Activated CD8-positive, alpha-beta T cell treated with anti-CD3 and anti-CD28 coated beads for 36 hours (primary cell): ENCODE measurements at regions of chr16 and their contacts with region 1.

Region 1: GRCh38 chr16:50665128-50665878 is 15.8 kb downstream of the SNX20 start:
- DNase-seq: peak; percentile 82
- ATAC-seq: peak; percentile 48
- H3K4me3 Mint-ChIP-seq: peak overlapping the region; percentile 54
- H3K27ac Mint-ChIP-seq: peak overlapping the region; percentile 58
- H3K4me1 Mint-ChIP-seq: peaks cover 31% of the 10 kb centered on the region
- H3K27me3 Mint-ChIP-seq: no peaks in the 10 kb centered on the region
- CTCF ChIP-seq: peak; percentile 96

Region 2: DNA sequence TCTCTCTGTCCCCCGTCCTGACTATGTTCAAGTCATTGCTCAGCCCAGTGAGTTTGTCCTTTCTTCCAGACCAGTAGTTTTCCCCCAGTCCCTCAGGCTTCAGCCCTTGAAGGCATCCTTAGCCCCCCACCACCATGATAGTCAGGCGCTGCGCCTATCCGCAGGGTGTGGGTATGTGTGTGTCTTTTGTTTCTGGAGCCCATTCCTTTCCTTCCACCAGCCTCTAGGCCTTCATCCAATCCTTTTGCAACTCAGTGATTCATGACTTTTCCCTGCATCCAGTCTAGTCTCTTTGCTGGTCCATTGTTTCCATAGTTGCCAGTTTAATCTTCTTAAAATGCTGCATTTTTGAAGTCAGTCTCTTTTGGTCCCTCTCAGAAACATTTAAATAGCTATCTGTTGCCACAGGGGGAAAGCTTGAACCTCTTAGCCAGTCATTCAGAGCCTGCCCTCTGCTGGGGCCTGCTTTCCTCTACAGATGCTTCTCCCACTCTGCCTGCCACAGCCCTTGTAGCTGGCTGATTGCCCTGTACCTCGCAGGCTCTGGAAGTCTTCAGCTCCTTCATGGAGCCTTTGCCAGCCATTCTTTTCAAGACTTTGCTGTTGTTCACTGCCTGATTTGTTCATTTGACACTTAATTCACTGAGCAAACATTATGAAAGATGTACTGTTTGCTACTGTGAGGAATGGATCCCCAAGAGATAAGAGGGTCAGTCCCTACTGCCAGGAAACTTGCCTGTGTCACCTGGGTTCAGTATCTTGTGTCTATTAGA is 454.9 kb before region 1 on chr16:
- CTCF ChIA-PET with region 1: interaction called, 10 read pairs
- POLR2A ChIA-PET with region 1: no interaction called
- intact Hi-C with region 1: no loop called
- DNase-seq: peak; percentile 84
- ATAC-seq: peak; percentile 97
- H3K4me3 Mint-ChIP-seq: no peak overlapping the region
- H3K27ac Mint-ChIP-seq: peak overlapping the region; percentile 58
- H3K4me1 Mint-ChIP-seq: peaks cover 27% of the 10 kb centered on the region
- H3K27me3 Mint-ChIP-seq: no peaks in the 10 kb centered on the region
- CTCF ChIP-seq: peak; percentile 70

Region 3: GRCh38 chr16:50368410-50369132 is 296.7 kb before region 1 on chr16 and contains the start of gene BRD7:
- CTCF ChIA-PET with region 1: interaction called, 25 read pairs
- POLR2A ChIA-PET with region 1: no interaction called
- intact Hi-C with region 1: loop called (anchors 10 kb)
- DNase-seq: peak; percentile 65
- ATAC-seq: peak; percentile 91
- H3K4me3 Mint-ChIP-seq: peak within 1 kb of the TSS; percentile 93
- H3K27ac Mint-ChIP-seq: peak within 1 kb of the TSS; percentile 92
- H3K4me1 Mint-ChIP-seq: peaks cover 36% of the 10 kb centered on the region
- H3K27me3 Mint-ChIP-seq: no peaks in the 10 kb centered on the region
- CTCF ChIP-seq: no peak
- total RNA-seq, gene BRD7: 76.2 to 93.4 TPM

Region 4: GRCh38 chr16:50425648-50426047 is 239.7 kb before region 1 on chr16:
- CTCF ChIA-PET with region 1: no interaction called
- POLR2A ChIA-PET with region 1: no interaction called
- intact Hi-C with region 1: no loop called
- DNase-seq: no peak
- ATAC-seq: no peak
- H3K4me3 Mint-ChIP-seq: no peak overlapping the region
- H3K27ac Mint-ChIP-seq: no peak overlapping the region
- H3K4me1 Mint-ChIP-seq: no peaks in the 10 kb centered on the region
- H3K27me3 Mint-ChIP-seq: peaks cover 1% of the 10 kb centered on the region
- CTCF ChIP-seq: no peak

Region 5: DNA sequence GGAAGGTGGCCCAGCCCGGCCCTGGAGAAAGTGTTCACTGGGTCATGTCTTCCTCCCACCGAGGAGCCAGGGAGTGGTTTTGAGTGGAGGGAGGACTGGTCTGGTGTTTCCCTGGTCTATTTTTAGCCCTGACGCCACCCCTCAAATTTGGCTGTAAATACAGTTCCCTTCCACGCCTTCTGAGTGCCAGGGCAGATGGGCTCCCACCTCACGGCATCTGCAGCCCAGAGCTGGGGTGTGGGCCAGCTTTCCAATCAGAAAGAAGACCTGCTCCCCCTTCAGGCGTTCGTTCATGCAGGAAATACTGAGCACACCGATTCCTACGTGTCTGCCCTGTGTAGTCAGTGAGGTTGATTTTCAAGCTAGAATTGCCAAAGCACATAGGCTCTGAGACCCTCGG is 37.9 kb before region 1 on chr16:
- CTCF ChIA-PET with region 1: interaction called, 28 read pairs
- POLR2A ChIA-PET with region 1: no interaction called
- intact Hi-C with region 1: no loop called
- DNase-seq: peak; percentile 75
- ATAC-seq: peak; percentile 84
- H3K4me3 Mint-ChIP-seq: no peak overlapping the region
- H3K27ac Mint-ChIP-seq: peak overlapping the region; percentile 54
- H3K4me1 Mint-ChIP-seq: peaks cover 29% of the 10 kb centered on the region
- H3K27me3 Mint-ChIP-seq: no peaks in the 10 kb centered on the region
- CTCF ChIP-seq: peak; percentile 32

Region 6: GRCh38 chr16:50681021-50681885 is 15.9 kb after region 1 on chr16 and contains the start of gene SNX20:
- CTCF ChIA-PET with region 1: interaction called, 168 read pairs
- POLR2A ChIA-PET with region 1: interaction called, 59 read pairs
- intact Hi-C with region 1: no loop called
- DNase-seq: peak; percentile 81
- ATAC-seq: peak; percentile 83
- H3K4me3 Mint-ChIP-seq: peak within 1 kb of the TSS; percentile 78
- H3K27ac Mint-ChIP-seq: peak within 1 kb of the TSS; percentile 93
- H3K4me1 Mint-ChIP-seq: peaks cover 79% of the 10 kb centered on the region
- H3K27me3 Mint-ChIP-seq: no peaks in the 10 kb centered on the region
- CTCF ChIP-seq: no peak
- total RNA-seq, gene SNX20: 24.6 to 25.0 TPM

Region 7: DNA sequence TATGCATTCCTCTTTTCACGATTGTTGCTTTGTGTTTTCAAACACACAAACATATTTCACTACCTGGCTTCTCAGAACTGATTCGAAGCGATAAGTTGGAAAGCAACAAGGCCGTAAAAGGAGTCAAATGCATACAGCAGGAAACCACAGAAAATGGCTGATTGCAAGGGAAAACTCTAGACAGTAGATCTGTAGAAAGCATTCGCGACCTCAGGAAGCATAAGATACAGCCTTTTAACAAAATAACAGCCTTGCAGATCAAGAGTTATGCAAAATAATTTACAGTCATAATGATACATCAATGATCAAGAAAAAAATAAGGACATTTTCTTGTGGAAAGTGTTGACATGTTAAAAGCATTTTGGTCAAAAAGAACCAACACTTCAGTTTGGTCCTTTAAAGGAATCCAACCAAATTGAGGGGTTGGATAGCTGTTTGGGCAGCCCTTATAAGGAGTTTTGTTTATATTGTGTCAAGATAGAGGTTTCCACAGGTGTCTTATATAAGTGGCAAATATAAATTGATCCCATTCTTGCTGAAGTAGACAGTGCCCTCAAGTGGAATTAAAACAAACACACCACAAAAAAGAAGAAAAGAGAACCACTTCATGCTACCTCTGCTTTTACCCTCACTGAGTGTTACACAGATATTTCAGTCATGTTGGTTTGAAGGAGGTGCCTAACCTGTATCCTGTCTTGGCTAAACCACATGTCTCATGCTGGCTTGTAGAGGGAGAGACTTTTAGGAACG is 82.1 kb after region 1 on chr16:
- CTCF ChIA-PET with region 1: interaction called, 340 read pairs
- POLR2A ChIA-PET with region 1: interaction called, 5 read pairs
- intact Hi-C with region 1: loop called (anchors 5 kb)
- DNase-seq: peak; percentile 25
- ATAC-seq: peak; percentile 66
- H3K4me3 Mint-ChIP-seq: peak overlapping the region; percentile 69
- H3K27ac Mint-ChIP-seq: peak overlapping the region; percentile 98
- H3K4me1 Mint-ChIP-seq: peaks cover 61% of the 10 kb centered on the region
- H3K27me3 Mint-ChIP-seq: no peaks in the 10 kb centered on the region
- CTCF ChIP-seq: peak; percentile 79